ENCODE measurements at regions of chr11 and their contacts with region 1.

Region 1: DNA sequence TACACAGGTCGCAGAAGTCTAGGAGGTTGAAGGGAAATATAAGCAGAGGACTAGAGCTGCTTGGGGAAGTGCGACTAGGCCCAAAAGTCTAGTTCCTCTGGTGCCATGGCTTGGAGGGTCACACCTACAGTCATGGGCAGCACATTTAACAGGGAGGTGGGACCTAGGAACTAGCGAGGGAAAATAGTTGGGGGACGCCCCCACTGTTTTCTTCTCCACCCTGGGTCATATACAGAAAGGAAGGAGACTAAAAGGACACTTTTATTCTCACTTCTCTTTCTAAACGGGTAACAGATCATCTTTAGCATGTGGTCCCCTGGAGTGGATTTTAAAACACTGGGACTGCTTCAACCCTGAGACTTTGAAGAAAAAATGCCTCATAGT is 16.6 kb downstream of the APIP start:
- H3K4me3 ChIP-seq: no peak overlapping the region
- H3K27ac ChIP-seq: no peak overlapping the region
- H3K4me1 ChIP-seq: no peaks in the 10 kb centered on the region
- CTCF ChIP-seq: no peak

Region 2: GRCh38 chr11:34585735-34586487 is 313.7 kb before region 1 on chr11:
- CTCF ChIA-PET with region 1: interaction called, 34 read pairs
- POLR2A ChIA-PET with region 1: no interaction called
- H3K4me3 ChIP-seq: 0 out of 2 replicates have a peak overlapping the region, but pooled peaks have one; percentile 8
- H3K27ac ChIP-seq: no peak overlapping the region
- H3K4me1 ChIP-seq: no peaks in the 10 kb centered on the region
- CTCF ChIP-seq: no peak

Region 3: DNA sequence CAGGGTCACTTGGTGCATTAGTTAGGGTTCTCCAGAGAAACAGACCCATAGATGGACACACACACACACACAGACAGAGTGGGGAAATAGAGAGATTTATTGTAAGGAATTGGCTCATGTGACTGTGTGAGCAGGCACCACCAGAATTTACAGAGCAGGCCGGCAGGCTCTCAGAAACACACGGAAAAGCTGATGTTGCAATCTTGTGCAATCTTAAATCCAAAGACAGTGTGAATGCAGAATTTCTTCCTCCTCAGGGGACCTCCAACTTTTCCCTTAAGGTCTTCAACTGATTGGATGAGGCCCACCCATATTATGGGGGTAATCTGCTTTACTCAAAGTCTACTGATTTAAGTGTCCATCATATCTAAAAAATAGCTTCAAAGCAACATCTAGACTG is 33.2 kb before region 1 on chr11:
- CTCF ChIA-PET with region 1: no interaction called
- POLR2A ChIA-PET with region 1: no interaction called
- H3K4me3 ChIP-seq: no peak overlapping the region
- H3K27ac ChIP-seq: no peak overlapping the region
- H3K4me1 ChIP-seq: no peaks in the 10 kb centered on the region
- CTCF ChIP-seq: no peak

Measured in HEK293 (cell line).